ENCODE measurements at regions of chr3 and their contacts with region 1.

Region 1: DNA sequence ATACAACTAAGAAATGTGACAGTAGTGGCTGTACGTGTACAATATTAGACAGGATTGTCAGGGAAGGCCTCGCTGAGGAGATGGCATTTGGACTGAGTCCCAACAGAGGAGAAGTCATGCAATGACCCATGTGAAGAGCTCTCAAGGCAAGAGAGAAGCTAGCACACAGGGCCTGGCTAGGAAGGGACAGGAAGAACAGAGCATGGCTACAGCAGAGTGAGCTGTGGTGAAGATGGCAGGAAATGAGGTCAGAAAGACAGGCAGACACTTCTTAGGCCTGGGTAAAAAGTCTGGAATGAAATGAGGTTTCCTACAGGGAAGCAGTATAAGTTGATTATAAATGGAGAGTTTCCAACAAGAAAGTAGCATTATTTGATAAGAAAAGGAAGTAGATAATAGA is 33.2 kb upstream of the LEKR1 start:
- DNase-seq: peak in 1 of 5 donors; percentile 28
- ATAC-seq: peak in 3 of 4 donors; percentile 27 to 45 (median 39)
- H3K4me3 ChIP-seq: no peak overlapping the region
- H3K27ac ChIP-seq: peak overlapping the region in 1 of 12 donors; percentile 44
- H3K4me1 ChIP-seq: peaks cover 0 to 36% (median under 1%) of the 10 kb centered on the region in 12 donors
- H3K27me3 ChIP-seq: no peaks in the 10 kb centered on the region
- CTCF ChIP-seq: no peak
- POLR2A ChIP-seq: no peak

Region 2: GRCh38 chr3:156859578-156859977 is 66.6 kb after region 1 on chr3:
- intact Hi-C with region 1: loop called in 1 of 10 experiments (anchors 10 kb)
- DNase-seq: no peak
- ATAC-seq: peak in 1 of 4 donors; percentile 42
- H3K4me3 ChIP-seq: no peak overlapping the region
- H3K27ac ChIP-seq: no peak overlapping the region
- H3K4me1 ChIP-seq: no peaks in the 10 kb centered on the region
- H3K27me3 ChIP-seq: no peaks in the 10 kb centered on the region
- CTCF ChIP-seq: no peak
- POLR2A ChIP-seq: no peak

Region 3: DNA sequence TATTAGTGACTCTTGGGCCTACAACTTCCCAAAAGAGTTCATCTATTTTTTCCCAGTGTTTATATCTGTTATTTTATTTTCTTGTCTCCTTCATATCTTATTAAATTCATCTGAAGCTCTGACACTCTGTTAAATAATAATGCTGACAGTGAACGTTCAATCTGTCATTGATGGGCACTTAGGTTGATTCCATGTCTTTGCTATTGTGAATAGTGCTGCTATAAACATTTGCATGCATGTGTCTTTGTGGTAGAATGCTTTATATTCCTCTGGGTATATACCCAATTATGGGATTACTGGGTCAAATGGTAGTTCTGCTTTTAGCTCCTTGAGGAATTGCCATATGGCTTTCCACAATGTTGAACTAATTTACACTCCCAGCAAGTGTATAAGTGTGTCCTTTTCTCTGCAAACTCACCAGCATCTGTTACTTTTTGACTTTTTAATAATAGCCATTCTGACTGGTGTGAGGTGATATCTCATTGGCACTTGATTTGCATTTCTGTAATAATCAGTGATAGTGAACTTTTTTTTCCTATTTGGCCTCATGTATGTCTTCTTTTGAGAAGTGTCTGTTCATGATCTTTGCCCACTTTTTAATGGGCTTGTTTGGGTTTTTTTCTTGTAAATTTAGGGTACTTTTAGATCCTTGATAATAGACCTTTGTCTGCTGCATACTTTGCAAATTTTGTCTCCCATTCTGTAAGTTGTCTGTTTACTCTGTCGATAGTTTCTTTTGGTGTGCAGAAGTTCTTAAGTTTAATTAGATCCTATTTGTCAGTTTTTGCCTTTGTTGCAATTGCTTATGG is 155.7 kb after region 1 on chr3:
- intact Hi-C with region 1: no loop called
- DNase-seq: no peak
- ATAC-seq: no peak
- H3K4me3 ChIP-seq: no peak overlapping the region
- H3K27ac ChIP-seq: no peak overlapping the region
- H3K4me1 ChIP-seq: no peaks in the 10 kb centered on the region
- H3K27me3 ChIP-seq: no peaks in the 10 kb centered on the region
- CTCF ChIP-seq: no peak
- POLR2A ChIP-seq: no peak

Measured in heart left ventricle (tissue), 16 donors.